ENCODE measurements at regions of chr2 and their contacts with region 1.

Region 1: GRCh38 chr2:236246711-236247246 is 17.4 kb downstream of the ASB18 start:
- DNase-seq: no peak
- H3K4me3 ChIP-seq: no peak overlapping the region
- H3K27ac ChIP-seq: no peak overlapping the region
- H3K4me1 ChIP-seq: no peaks in the 10 kb centered on the region
- H3K27me3 ChIP-seq: no peaks in the 10 kb centered on the region
- CTCF ChIP-seq: no peak
- POLR2A ChIP-seq: no peak

Region 2: GRCh38 chr2:236302555-236302954 is 55.8 kb after region 1 on chr2:
- intact Hi-C with region 1: loop called (anchors 5 kb)
- DNase-seq: no peak
- H3K4me3 ChIP-seq: no peak overlapping the region
- H3K27ac ChIP-seq: no peak overlapping the region
- H3K4me1 ChIP-seq: no peaks in the 10 kb centered on the region
- H3K27me3 ChIP-seq: no peaks in the 10 kb centered on the region
- CTCF ChIP-seq: no peak
- POLR2A ChIP-seq: no peak

Measured in breast epithelium (tissue), 4 donors.